ENCODE measurements at regions of chr21 and their contacts with region 1.

Region 1: DNA sequence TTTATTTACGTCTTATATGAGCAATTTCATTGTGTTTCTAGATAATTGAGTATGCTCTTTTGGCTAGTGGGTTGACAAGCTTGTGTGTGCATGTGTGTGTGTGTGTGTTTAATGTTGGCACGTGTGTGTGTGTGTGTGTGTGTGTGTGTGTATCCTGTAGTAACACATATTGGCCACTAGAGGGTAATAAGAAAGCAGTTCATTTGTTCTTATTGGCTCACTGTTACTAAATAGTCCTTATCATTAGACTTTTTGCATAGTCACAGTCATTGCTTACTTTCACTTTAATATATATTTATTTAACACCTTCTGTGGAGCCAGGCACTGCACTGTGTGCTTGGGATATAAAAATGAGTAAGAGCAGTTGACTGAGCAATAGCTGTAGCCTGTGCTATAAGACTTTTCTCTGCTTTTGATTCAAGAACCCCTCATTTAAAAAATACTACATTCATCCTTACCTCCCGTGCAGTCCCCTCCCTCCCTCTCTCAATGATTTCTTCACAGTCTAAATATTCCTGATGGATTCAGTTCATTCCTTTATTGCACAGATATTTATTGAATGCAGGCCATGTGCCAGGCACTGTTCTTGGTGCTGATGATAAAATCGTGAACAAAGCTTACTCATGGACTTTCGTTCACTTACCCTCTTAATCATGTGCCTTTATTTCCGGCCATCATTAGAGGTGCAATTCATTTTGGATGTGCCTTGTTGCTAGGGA is 96.7 kb downstream of the DYRK1A start:
- DNase-seq: peak in 6 of 9 donors; percentile 20 to 45 (median 31)
- ATAC-seq: peak; percentile 85
- H3K4me3 ChIP-seq: no peak overlapping the region
- H3K4me3 Mint-ChIP-seq: peak overlapping the region in 9 of 10 donors; percentile 3 to 80 (median 67)
- H3K27ac ChIP-seq: no peak overlapping the region
- H3K27ac Mint-ChIP-seq: peak overlapping the region; percentile 24 to 93 (median 81)
- H3K4me1 ChIP-seq: peaks cover 37 to 39% of the 10 kb centered on the region in 2 donors
- H3K4me1 Mint-ChIP-seq: peaks cover 56 to 98% (median 87%) of the 10 kb centered on the region in 7 donors
- H3K27me3 ChIP-seq: no peaks in the 10 kb centered on the region
- H3K27me3 Mint-ChIP-seq: no peaks in the 10 kb centered on the region

Region 2: GRCh38 chr21:37072988-37073416 is 390.2 kb before region 1 on chr21 and contains the starts of genes PIGP and TTC3:
- CTCF ChIA-PET with region 1: no interaction called
- POLR2A ChIA-PET with region 1: no interaction called
- intact Hi-C with region 1: loop called in 1 of 2 experiments (anchors 10 kb)
- DNase-seq: peak; percentile 93 to 99 (median 97)
- ATAC-seq: peak; percentile 79
- H3K4me3 ChIP-seq: peak within 1 kb of the TSS; percentile 76
- H3K4me3 Mint-ChIP-seq: peak within 1 kb of the TSS; percentile 88 to 100 (median 98)
- H3K27ac ChIP-seq: peak within 1 kb of the TSS; percentile 97
- H3K27ac Mint-ChIP-seq: peak within 1 kb of the TSS; percentile 91 to 100 (median 97)
- H3K4me1 ChIP-seq: peaks cover 22 to 23% of the 10 kb centered on the region in 2 donors
- H3K4me1 Mint-ChIP-seq: peaks cover 30 to 66% (median 59%) of the 10 kb centered on the region in 7 donors
- H3K27me3 ChIP-seq: no peaks in the 10 kb centered on the region
- H3K27me3 Mint-ChIP-seq: peaks cover 0 to 6% (median 0%) of the 10 kb centered on the region in 5 donors
- total RNA-seq, gene PIGP: 9.1 to 26.7 (median 15.3) TPM
- total RNA-seq, gene TTC3: 66.6 to 208 (median 154) TPM

Region 3: DNA sequence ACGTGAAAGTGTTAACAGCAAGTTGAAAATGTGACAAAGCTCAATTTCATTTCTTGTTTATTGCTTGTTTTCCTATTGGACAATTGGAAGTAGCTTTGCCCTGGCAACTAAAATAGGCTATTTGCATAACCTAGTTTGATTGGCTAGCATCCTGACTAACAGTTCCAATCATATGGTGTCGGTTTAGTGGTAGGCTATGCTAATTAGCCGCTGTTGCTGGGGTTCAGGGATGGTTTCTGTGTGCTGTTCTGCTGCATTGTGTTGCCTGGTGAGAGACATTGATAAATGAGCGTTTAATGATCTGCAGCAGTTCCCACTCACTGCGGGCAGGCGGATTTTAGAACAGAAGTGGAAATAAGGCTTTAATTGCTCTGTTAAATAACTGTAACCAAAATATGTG is 28.1 kb before region 1 on chr21:
- CTCF ChIA-PET with region 1: interaction called, 3 read pairs
- POLR2A ChIA-PET with region 1: no interaction called
- intact Hi-C with region 1: loop called in 1 of 2 experiments (anchors 2 kb)
- DNase-seq: peak in 7 of 9 donors; percentile 58 to 85 (median 78)
- ATAC-seq: peak; percentile 99
- H3K4me3 ChIP-seq: no peak overlapping the region
- H3K4me3 Mint-ChIP-seq: no peak overlapping the region
- H3K27ac ChIP-seq: peak overlapping the region; percentile 4
- H3K27ac Mint-ChIP-seq: no peak overlapping the region
- H3K4me1 ChIP-seq: peaks cover 28 to 49% of the 10 kb centered on the region in 2 donors
- H3K4me1 Mint-ChIP-seq: peaks cover 39 to 61% (median 41%) of the 10 kb centered on the region in 7 donors
- H3K27me3 ChIP-seq: no peaks in the 10 kb centered on the region
- H3K27me3 Mint-ChIP-seq: no peaks in the 10 kb centered on the region

Region 4: GRCh38 chr21:37445228-37445627 is 18.0 kb before region 1 on chr21:
- CTCF ChIA-PET with region 1: no interaction called
- POLR2A ChIA-PET with region 1: interaction called, 3 read pairs
- intact Hi-C with region 1: loop called in 1 of 2 experiments (anchors 2 kb)
- DNase-seq: no peak
- ATAC-seq: no peak
- H3K4me3 ChIP-seq: no peak overlapping the region
- H3K4me3 Mint-ChIP-seq: peak overlapping the region in 3 of 10 donors; percentile 4 to 28 (median 17)
- H3K27ac ChIP-seq: no peak overlapping the region
- H3K27ac Mint-ChIP-seq: peak overlapping the region in 6 of 9 donors; percentile 4 to 58 (median 18)
- H3K4me1 ChIP-seq: peaks cover 37 to 38% of the 10 kb centered on the region in 2 donors
- H3K4me1 Mint-ChIP-seq: peaks cover 61 to 100% (median 92%) of the 10 kb centered on the region in 7 donors
- H3K27me3 ChIP-seq: no peaks in the 10 kb centered on the region
- H3K27me3 Mint-ChIP-seq: no peaks in the 10 kb centered on the region

Region 5: GRCh38 chr21:37496972-37497371 is 33.7 kb after region 1 on chr21:
- CTCF ChIA-PET with region 1: no interaction called
- POLR2A ChIA-PET with region 1: no interaction called
- intact Hi-C with region 1: loop called in 1 of 2 experiments (anchors 5 kb)
- DNase-seq: peak in 1 of 9 donors; percentile 10
- ATAC-seq: no peak
- H3K4me3 ChIP-seq: no peak overlapping the region
- H3K4me3 Mint-ChIP-seq: no peak overlapping the region
- H3K27ac ChIP-seq: no peak overlapping the region
- H3K27ac Mint-ChIP-seq: peak overlapping the region in 3 of 9 donors; percentile 8 to 71 (median 36)
- H3K4me1 ChIP-seq: no peaks in the 10 kb centered on the region
- H3K4me1 Mint-ChIP-seq: peaks cover 7 to 57% (median 29%) of the 10 kb centered on the region in 7 donors
- H3K27me3 ChIP-seq: no peaks in the 10 kb centered on the region
- H3K27me3 Mint-ChIP-seq: no peaks in the 10 kb centered on the region

Region 6: DNA sequence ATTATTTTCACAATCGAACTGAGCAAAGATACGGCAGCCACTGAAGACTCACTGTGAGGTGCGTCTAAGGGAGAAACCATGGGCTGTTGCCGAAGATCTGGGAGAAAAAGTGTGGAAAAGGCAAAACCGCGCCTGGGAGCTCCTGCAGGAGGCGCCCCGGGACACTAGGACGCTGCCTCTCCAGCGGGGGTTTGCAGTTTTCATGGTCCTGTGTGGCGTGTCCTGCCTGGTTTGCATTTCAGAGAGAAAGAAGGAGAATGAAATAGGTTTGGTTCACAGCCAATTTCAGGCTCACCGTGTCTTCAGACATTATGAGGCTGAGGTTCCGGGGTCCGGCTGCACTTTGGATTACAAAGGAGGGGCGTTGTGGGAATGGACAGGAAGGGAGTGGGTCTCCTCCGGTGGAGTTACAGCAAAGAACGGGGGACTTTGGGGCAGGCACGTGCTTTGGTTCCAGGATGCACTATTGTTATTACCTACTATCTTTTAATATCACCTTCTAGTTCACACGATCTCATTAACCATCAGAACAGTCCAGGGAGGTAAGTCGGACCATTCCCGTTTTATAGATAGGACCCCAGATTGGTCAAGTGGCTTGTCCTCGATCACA is 83.2 kb after region 1 on chr21:
- CTCF ChIA-PET with region 1: no interaction called
- POLR2A ChIA-PET with region 1: no interaction called
- intact Hi-C with region 1: no loop called
- DNase-seq: peak in 1 of 9 donors; percentile 7
- ATAC-seq: no peak
- H3K4me3 ChIP-seq: no peak overlapping the region
- H3K4me3 Mint-ChIP-seq: peak overlapping the region in 2 of 10 donors; percentile 4 to 57
- H3K27ac ChIP-seq: no peak overlapping the region
- H3K27ac Mint-ChIP-seq: no peak overlapping the region
- H3K4me1 ChIP-seq: peaks cover 0 to 4% of the 10 kb centered on the region in 2 donors
- H3K4me1 Mint-ChIP-seq: peaks cover 14 to 30% (median 21%) of the 10 kb centered on the region in 7 donors
- H3K27me3 ChIP-seq: no peaks in the 10 kb centered on the region
- H3K27me3 Mint-ChIP-seq: peaks cover 17 to 58% (median 45%) of the 10 kb centered on the region in 5 donors

Region 7: GRCh38 chr21:37675202-37675801 is 212.1 kb after region 1 on chr21:
- CTCF ChIA-PET with region 1: no interaction called
- POLR2A ChIA-PET with region 1: no interaction called
- intact Hi-C with region 1: no loop called
- DNase-seq: peak; percentile 20 to 66 (median 38)
- ATAC-seq: peak; percentile 67
- H3K4me3 ChIP-seq: no peak overlapping the region
- H3K4me3 Mint-ChIP-seq: no peak overlapping the region
- H3K27ac ChIP-seq: no peak overlapping the region
- H3K27ac Mint-ChIP-seq: peak overlapping the region in 1 of 9 donors; percentile 70
- H3K4me1 ChIP-seq: no peaks in the 10 kb centered on the region
- H3K4me1 Mint-ChIP-seq: peaks cover 0 to 2% (median 0%) of the 10 kb centered on the region in 7 donors
- H3K27me3 ChIP-seq: no peaks in the 10 kb centered on the region
- H3K27me3 Mint-ChIP-seq: peaks cover 18 to 50% (median 29%) of the 10 kb centered on the region in 5 donors

Measured in naive thymus-derived CD4-positive, alpha-beta T cell (primary cell).